ENCODE measurements at regions of chr20 and their contacts with region 1.

Region 1: DNA sequence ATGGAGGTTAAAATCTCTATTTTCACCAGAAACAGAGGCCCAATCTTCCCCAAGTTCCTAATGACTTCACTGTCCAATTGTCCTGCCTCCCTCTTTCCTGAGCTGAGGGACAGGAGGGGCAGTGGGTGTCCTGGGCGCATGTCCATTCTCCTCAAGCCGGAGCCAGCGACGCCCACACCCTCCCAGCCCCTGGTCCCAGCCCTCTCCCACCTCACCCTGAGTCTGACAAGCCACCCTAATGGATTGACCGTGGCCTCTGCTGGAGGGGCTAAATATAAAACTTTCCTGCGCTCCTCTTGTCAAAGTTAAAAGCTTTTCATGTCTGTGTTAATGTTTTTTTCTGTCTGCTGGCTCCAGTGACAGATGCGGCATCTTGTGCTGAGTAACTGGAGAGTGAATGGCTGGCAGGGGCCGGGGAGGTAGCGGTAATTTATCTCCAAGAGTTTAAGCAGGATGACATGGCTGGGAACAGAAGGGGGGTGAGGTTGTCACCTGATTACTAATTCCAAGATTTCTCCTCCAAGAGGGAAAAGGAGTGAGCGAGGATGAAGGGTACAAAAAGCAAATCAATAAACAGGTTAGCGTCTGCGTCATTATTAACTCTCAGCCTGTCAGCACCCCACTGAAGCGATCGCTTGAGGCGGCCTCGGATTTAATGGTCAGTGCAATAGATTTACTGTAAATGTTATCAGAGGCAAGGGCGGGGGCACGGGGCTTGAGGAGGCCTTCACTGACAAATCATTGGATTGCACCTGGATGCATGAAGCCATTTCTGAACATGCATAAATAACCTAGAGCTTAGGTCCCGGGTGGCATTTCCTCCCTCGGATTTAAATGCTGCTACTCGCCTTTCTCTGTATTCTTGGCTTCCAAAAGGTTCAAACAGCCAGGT is 118.1 kb upstream of the MAFB start:
- DNase-seq: no peak
- H3K4me3 ChIP-seq: no peak overlapping the region
- H3K27ac ChIP-seq: no peak overlapping the region
- H3K4me1 ChIP-seq: no peaks in the 10 kb centered on the region
- H3K27me3 ChIP-seq: no peaks in the 10 kb centered on the region
- CTCF ChIP-seq: no peak
- EP300 ChIP-seq: no peak
- POLR2A ChIP-seq: no peak

Region 2: DNA sequence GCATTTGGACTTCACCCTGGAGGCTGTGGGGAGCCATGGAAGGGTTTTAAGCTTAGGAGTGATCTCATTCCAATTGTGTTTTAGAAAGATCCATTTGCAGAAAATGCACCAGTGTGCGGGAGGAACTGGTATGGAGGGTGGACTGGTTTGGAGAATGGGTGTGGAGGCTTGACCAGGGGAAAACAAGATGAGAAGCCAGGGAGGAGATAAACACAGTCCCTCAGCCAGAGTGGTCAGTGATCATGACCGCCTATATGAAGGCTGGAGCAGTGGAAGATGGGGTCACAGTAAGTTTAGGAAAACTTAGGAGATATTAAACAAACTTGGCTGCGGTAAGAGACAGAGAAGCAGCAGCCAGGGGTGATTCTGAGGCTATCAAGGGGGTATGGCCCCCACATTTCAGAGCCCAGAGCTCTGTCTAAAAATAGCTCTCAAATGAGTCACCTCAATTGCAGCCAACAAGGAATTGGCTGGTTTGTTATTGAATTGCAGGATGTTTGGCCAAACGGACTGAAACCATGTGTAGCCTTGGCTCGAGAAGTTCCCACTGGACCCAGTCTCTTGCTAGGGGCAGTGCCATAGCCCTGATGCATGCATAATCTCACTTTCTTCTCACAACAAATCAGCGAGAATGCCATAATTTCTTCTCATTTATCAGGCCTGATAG is 61.5 kb after region 1 on chr20:
- intact Hi-C with region 1: loop called in 1 of 4 experiments (anchors 10 kb)
- DNase-seq: peak; percentile 44 to 62 (median 58)
- H3K4me3 ChIP-seq: no peak overlapping the region
- H3K27ac ChIP-seq: peak overlapping the region in 1 of 2 donors; percentile 0
- H3K4me1 ChIP-seq: peaks cover 11% of the 10 kb centered on the region
- H3K27me3 ChIP-seq: no peaks in the 10 kb centered on the region
- CTCF ChIP-seq: no peak
- EP300 ChIP-seq: no peak
- POLR2A ChIP-seq: no peak

Region 3: DNA sequence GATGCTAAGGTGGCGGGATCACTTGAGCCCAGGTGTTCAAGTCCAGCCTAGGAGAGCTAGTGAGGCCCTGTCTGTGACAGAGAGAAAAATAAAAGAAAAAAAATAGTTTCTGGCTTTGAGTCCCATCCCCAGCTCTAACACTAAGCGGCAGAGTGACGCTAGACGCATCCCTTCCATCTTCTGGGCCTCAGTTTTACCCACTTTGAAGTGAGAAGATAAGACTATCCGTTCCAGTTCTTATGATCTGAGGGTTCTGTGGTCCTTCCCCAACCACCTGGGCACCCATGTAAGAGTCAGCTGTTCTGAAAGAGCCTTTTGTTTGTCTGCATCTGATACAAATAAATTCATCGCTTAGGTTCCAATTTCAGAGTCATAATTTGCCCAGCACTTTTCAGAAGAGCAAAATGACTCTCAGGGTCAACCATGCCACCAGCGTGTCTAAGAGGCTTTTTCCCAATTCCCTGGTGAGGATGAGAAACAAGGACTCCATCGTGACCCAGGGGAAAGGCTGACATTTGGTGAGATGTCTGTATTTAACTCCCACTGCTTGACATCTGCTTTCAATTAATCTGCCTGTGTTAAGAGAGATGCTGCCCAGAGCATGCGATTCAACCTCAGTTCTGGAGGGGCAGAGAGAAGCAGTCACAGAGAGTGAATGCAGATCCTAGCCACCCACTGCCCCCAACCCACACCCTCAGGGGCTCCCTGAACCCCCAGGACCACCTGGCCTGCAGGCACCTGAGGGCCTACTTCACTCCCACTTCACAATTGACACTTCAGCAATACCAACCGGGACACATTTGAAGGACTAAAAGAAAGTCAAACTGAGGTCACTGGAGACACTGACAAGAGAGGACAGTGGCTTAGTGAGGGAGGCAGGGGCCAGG is 89.9 kb after region 1 on chr20:
- intact Hi-C with region 1: loop called in 1 of 4 experiments (anchors 10 kb)
- DNase-seq: no peak
- H3K4me3 ChIP-seq: no peak overlapping the region
- H3K27ac ChIP-seq: no peak overlapping the region
- H3K4me1 ChIP-seq: no peaks in the 10 kb centered on the region
- H3K27me3 ChIP-seq: no peaks in the 10 kb centered on the region
- CTCF ChIP-seq: no peak
- EP300 ChIP-seq: no peak
- POLR2A ChIP-seq: no peak

Region 4: GRCh38 chr20:41047975-41048305 is 240.8 kb after region 1 on chr20:
- intact Hi-C with region 1: no loop called
- DNase-seq: no peak
- H3K4me3 ChIP-seq: no peak overlapping the region
- H3K27ac ChIP-seq: no peak overlapping the region
- H3K4me1 ChIP-seq: peaks cover 21% of the 10 kb centered on the region
- H3K27me3 ChIP-seq: no peaks in the 10 kb centered on the region
- CTCF ChIP-seq: no peak
- EP300 ChIP-seq: no peak
- POLR2A ChIP-seq: no peak